Mammary epithelial cell (primary cell): ENCODE measurements at regions of chr18 and their contacts with region 1.

Region 1: GRCh38 chr18:35063875-35064690 is 22.9 kb downstream of the MAPRE2 start:
- DNase-seq: no peak
- H3K4me3 ChIP-seq: no peak overlapping the region
- H3K27ac ChIP-seq: no peak overlapping the region
- H3K4me1 ChIP-seq: no peaks in the 10 kb centered on the region
- H3K27me3 ChIP-seq: no peaks in the 10 kb centered on the region
- CTCF ChIP-seq: no peak

Region 2: GRCh38 chr18:34809451-34810072 is 254.5 kb before region 1 on chr18:
- CTCF ChIA-PET with region 1: no interaction called
- dilution Hi-C with region 1: no loop called
- in situ Hi-C with region 1: no loop called
- intact Hi-C with region 1: no loop called
- DNase-seq: peak; percentile 35
- H3K4me3 ChIP-seq: no peak overlapping the region
- H3K27ac ChIP-seq: no peak overlapping the region
- H3K4me1 ChIP-seq: peaks cover 14% of the 10 kb centered on the region
- H3K27me3 ChIP-seq: no peaks in the 10 kb centered on the region
- CTCF ChIP-seq: peak; percentile 51 to 62

Region 3: DNA sequence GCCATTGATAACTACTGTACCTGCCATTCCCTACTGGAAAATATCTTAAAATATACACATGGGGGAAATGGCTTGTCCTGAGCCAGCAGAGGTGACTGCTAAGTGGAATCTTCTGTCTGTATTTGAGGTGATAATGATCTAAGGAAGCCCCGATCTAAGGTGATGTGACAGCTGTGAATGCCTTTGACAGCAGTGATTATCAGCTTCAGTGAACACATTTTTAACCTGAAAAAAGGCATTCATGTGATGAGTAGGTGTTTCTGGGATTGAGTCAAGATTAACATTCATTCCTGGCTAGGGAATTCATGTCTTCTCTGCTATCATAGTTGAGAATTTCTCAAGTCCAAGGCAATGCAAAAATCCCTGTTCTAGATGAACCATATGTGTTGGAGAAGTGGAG is 32.0 kb before region 1 on chr18:
- CTCF ChIA-PET with region 1: interaction called, 11 read pairs
- dilution Hi-C with region 1: no loop called
- in situ Hi-C with region 1: no loop called
- intact Hi-C with region 1: no loop called
- DNase-seq: no peak
- H3K4me3 ChIP-seq: no peak overlapping the region
- H3K27ac ChIP-seq: no peak overlapping the region
- H3K4me1 ChIP-seq: peaks cover 3% of the 10 kb centered on the region
- H3K27me3 ChIP-seq: no peaks in the 10 kb centered on the region
- CTCF ChIP-seq: no peak

Region 4: DNA sequence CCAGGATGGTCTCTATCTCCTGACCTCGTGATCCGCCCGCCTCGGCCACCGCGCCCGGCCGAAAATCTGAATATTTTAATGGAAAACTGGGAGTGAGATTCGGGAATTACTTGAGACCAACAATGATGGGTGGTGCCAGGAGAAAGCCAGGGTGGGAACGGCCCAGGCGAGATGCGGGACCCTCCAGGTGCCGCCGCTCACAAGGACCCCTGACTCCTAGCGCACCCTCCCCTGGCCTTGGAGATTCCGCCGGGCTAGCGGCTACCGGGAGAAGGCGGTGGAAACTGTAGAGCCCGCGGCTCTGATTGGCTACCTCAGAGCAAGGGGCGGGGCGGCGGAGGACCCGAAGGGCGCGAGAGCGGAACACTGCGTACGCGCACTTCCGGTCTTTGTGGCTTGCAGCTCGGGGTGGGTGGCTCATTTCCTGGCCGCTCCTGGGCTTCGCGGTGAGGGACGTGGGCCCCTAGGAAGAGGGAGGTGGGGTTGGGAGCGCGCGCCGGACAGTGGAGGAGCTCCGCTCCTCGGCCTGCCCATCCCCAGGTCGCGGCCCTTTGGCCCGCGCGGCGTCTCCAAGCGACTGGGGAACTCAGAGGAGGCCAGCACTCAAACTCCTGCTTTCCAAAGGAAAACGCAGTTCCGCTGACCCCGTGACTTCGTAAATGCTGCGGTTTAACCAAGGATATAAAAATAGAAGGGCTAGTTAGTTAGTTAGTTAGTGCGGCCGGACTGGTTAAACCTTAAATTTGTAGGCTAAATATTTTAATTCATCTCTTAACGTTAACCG is 176.8 kb after region 1 on chr18 and contains the start of gene ZNF397:
- CTCF ChIA-PET with region 1: no interaction called
- dilution Hi-C with region 1: no loop called
- in situ Hi-C with region 1: no loop called
- intact Hi-C with region 1: no loop called
- DNase-seq: peak; percentile 93
- H3K4me3 ChIP-seq: peak within 1 kb of the TSS; percentile 67 to 94 (median 90)
- H3K27ac ChIP-seq: peak within 1 kb of the TSS; percentile 85
- H3K4me1 ChIP-seq: no peaks in the 10 kb centered on the region
- H3K27me3 ChIP-seq: no peaks in the 10 kb centered on the region
- CTCF ChIP-seq: no peak
- total RNA-seq, gene ZNF397: 13.3 to 15.5 TPM